ENCODE measurements at regions of chr16 and their contacts with region 1.

Region 1: GRCh38 chr16:13919683-13920509 is at the start of gene ERCC4:
- DNase-seq: peak; percentile 99
- ATAC-seq: peak; percentile 99
- H3K4me3 Mint-ChIP-seq: peak within 1 kb of the TSS; percentile 94
- H3K27ac Mint-ChIP-seq: peak within 1 kb of the TSS; percentile 84
- H3K4me1 Mint-ChIP-seq: peaks cover 19% of the 10 kb centered on the region
- H3K27me3 Mint-ChIP-seq: no peaks in the 10 kb centered on the region
- total RNA-seq, gene ERCC4: 11.5 to 13.9 TPM

Region 2: DNA sequence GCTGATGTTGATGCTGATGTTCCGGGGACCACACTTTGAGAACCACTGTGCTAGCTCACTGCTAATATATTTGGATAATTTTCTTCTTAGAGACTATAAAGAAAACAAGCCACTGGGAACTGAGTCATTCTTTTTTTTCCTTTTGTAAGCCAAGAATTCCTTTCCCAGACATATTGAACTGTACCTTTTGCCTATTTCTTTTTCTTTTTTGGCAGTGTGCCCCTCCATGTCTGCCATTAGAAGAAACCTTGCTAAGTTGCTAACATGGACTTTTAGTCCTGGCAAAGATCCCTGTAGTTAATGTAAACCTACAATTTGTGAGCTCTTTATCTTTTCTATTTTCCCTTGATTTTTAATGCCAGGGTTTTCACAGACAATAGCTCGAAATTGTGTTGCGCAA is 17.2 kb before region 1 on chr16:
- CTCF ChIA-PET with region 1: interaction called, 20 read pairs
- POLR2A ChIA-PET with region 1: no interaction called
- intact Hi-C with region 1: no loop called
- DNase-seq: no peak
- ATAC-seq: no peak
- H3K4me3 Mint-ChIP-seq: no peak overlapping the region
- H3K27ac Mint-ChIP-seq: no peak overlapping the region
- H3K4me1 Mint-ChIP-seq: no peaks in the 10 kb centered on the region
- H3K27me3 Mint-ChIP-seq: peaks cover 24% of the 10 kb centered on the region

Region 3: DNA sequence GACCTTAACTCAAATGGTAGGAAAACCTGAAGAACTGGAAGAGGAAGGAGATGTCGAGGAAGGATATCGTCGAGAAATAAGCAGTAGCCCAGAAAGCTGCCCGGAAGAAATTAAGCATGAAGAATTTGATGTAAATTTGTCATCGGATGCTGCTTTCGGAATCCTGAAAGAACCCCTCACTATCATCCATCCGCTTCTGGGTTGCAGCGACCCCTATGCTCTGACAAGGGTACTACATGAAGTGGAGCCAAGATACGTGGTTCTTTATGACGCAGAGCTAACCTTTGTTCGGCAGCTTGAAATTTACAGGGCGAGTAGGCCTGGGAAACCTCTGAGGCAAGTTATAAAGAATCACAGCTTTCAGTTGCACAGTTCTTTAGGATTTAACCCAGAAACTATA is 15.5 kb after region 1 on chr16:
- CTCF ChIA-PET with region 1: interaction called, 65 read pairs
- POLR2A ChIA-PET with region 1: no interaction called
- intact Hi-C with region 1: no loop called
- DNase-seq: peak; percentile 55
- ATAC-seq: no peak
- H3K4me3 Mint-ChIP-seq: no peak overlapping the region
- H3K27ac Mint-ChIP-seq: no peak overlapping the region
- H3K4me1 Mint-ChIP-seq: peaks cover 19% of the 10 kb centered on the region
- H3K27me3 Mint-ChIP-seq: no peaks in the 10 kb centered on the region

Region 4: GRCh38 chr16:14193316-14193871 is 273.5 kb after region 1 on chr16:
- CTCF ChIA-PET with region 1: interaction called, 4 read pairs
- POLR2A ChIA-PET with region 1: interaction called, 6 read pairs
- intact Hi-C with region 1: loop called in 1 of 2 experiments (anchors 10 kb)
- DNase-seq: peak; percentile 66
- ATAC-seq: peak; percentile 97
- H3K4me3 Mint-ChIP-seq: peak overlapping the region; percentile 64
- H3K27ac Mint-ChIP-seq: peak overlapping the region; percentile 84
- H3K4me1 Mint-ChIP-seq: peaks cover 40% of the 10 kb centered on the region
- H3K27me3 Mint-ChIP-seq: no peaks in the 10 kb centered on the region

Region 5: GRCh38 chr16:14285513-14286385 is 365.9 kb after region 1 on chr16:
- CTCF ChIA-PET with region 1: interaction called, 9 read pairs
- POLR2A ChIA-PET with region 1: interaction called, 7 read pairs
- intact Hi-C with region 1: loop called (anchors 1 kb)
- DNase-seq: peak; percentile 95
- ATAC-seq: peak; percentile 78
- H3K4me3 Mint-ChIP-seq: peak overlapping the region; percentile 80
- H3K27ac Mint-ChIP-seq: peak overlapping the region; percentile 84
- H3K4me1 Mint-ChIP-seq: peaks cover 13% of the 10 kb centered on the region
- H3K27me3 Mint-ChIP-seq: no peaks in the 10 kb centered on the region

Region 6: DNA sequence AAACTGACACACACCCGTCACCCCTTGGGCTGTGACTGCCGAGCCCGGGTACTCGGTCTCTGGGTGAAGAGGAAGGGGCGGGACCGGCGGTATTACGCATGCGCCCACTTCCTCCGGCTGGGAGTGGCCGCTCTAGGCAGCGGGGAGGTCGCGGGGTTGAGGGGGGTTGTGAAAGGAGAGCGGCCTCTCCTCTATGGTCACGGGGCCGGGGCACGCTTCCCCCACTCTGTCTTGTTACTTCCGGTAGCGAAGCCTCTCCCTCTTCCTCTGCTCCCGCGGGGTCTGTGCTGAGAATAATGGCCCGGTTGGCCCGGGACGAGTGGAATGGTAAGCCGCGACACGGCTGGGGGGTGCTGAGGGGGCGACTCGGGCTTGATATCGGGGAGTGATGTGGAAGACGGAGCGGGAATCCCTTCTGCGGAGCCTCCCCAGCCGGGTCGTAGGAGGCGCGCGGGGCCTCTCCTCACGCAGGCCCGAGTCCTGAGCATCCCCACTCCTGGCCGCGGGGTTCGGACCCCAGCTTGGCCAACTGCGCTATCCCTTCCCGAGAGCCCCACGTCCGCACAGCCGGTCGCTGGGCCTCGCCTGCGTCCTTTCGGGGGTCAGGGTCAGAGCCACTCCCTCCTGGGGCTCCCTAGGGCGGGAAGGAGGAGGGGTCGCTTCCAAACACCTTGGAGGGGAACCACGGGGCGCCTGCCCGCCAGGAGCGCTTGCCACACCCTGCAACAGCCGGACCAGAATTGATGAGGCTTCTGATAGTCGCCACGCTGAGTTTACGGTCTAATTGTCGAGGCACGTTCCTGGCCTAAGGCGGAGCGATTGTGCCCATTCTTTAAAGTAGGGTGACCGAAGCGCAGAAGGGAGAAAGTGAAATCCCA is 713.0 kb after region 1 on chr16 and contains the start of gene BFAR:
- CTCF ChIA-PET with region 1: interaction called, 4 read pairs
- POLR2A ChIA-PET with region 1: no interaction called
- intact Hi-C with region 1: loop called (anchors 1 to 5 kb)
- DNase-seq: peak; percentile 100
- ATAC-seq: peak; percentile 78
- H3K4me3 Mint-ChIP-seq: peak within 1 kb of the TSS; percentile 97
- H3K27ac Mint-ChIP-seq: peak within 1 kb of the TSS; percentile 99
- H3K4me1 Mint-ChIP-seq: peaks cover 51% of the 10 kb centered on the region
- H3K27me3 Mint-ChIP-seq: no peaks in the 10 kb centered on the region
- total RNA-seq, gene BFAR: 54.8 to 57.5 TPM